ENCODE measurements at regions of chr17 and their contacts with region 1.

Region 1: GRCh38 chr17:40450175-40450574 is 6.9 kb downstream of the IGFBP4 start:
- DNase-seq: peak; percentile 49 to 81
- H3K4me3 ChIP-seq: no peak overlapping the region
- H3K27ac ChIP-seq: no peak overlapping the region
- H3K4me1 ChIP-seq: peaks cover 2 to 11% (median 7%) of the 10 kb centered on the region in 4 experiments; a peak in 5 of 7 replicates
- H3K27me3 ChIP-seq: no peaks in the 10 kb centered on the region
- CTCF ChIP-seq: peak; percentile 57 to 66 (median 60)
- EP300 ChIP-seq: no peak
- POLR2A ChIP-seq: no peak
- RAD21 ChIP-seq: peak; percentile 26 to 44; a peak in 3 of 4 replicates

Region 2: GRCh38 chr17:40340327-40340726 is 109.8 kb before region 1 on chr17:
- CTCF ChIA-PET with region 1: no interaction called
- POLR2A ChIA-PET with region 1: no interaction called
- DNase-seq: no peak
- H3K4me3 ChIP-seq: no peak overlapping the region
- H3K27ac ChIP-seq: no peak overlapping the region
- H3K4me1 ChIP-seq: peaks cover 11 to 27% (median 21%) of the 10 kb centered on the region in 4 experiments
- H3K27me3 ChIP-seq: peaks cover 22 to 76% (median 55%) of the 10 kb centered on the region in 4 experiments
- CTCF ChIP-seq: no peak
- EP300 ChIP-seq: no peak
- POLR2A ChIP-seq: no peak
- RAD21 ChIP-seq: no peak

Region 3: GRCh38 chr17:40422990-40423616 is 27.1 kb before region 1 on chr17:
- CTCF ChIA-PET with region 1: interaction called, 20 read pairs
- POLR2A ChIA-PET with region 1: interaction called, 4 read pairs
- DNase-seq: peak in 1 of 2 experiments; percentile 73
- H3K4me3 ChIP-seq: peak overlapping the region in 1 of 4 experiments; percentile 11; a peak in 1 of 8 replicates
- H3K27ac ChIP-seq: no peak overlapping the region
- H3K4me1 ChIP-seq: peaks cover 4 to 21% (median 10%) of the 10 kb centered on the region in 4 experiments
- H3K27me3 ChIP-seq: no peaks in the 10 kb centered on the region
- CTCF ChIP-seq: peak; percentile 1 to 16 (median 4); a peak in 3 of 4 replicates
- EP300 ChIP-seq: no peak; a peak in 1 of 3 replicates
- POLR2A ChIP-seq: no peak
- RAD21 ChIP-seq: no peak

Measured in H1 (cell line).